Endothelial cell of umbilical vein (primary cell): ENCODE measurements at regions of chr19 and their contacts with region 1.

Region 1: DNA sequence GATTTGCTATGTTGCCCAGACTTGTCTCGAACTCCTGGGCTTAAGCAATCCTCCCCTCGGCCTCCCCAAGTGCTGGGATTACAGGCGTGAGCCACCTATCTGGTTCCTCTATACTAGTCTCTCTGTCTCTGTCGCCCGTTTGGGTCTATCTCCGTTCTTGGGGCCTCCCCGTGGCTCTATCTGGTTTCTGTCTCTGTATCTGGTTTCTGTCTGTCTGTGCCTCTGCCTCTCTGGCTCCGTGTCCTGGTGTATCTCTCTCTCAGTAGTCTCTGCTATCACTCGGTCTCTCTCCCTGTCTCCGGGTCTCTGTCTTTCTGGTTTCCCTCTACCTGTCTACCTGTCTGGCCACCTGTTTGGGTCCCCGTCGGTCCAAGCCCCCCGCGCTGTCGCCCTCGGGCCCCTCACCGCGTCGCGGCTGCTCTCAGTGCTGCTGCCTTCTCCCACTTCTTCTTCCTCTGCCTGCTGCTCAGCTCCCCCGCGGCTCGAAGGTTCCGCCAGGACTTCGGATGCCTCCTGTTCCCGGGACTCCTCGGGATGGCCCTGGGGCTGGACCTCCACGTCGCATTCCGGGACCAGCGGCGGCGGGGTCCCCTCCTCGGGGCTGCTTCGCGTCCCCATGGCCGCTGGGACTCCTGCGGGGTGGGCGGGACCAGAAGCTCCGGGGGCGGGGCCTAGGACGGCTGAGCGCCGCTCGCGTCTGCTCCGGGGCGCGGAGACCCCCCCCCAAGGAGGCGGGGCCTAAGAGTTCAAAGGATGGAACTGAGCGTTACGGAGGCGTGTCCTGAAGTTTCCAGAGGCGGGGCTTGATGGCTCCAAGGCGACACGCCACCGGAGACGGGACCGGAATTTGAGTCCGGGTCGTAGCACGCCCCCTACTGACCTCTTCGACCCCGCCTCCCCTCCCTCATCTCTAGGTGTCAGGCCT is 783 bp downstream of the PHLDB3 start:
- DNase-seq: peak; percentile 95
- H3K4me3 ChIP-seq: peak overlapping the region; percentile 42 to 66 (median 49)
- H3K27ac ChIP-seq: peak overlapping the region; percentile 31
- H3K4me1 ChIP-seq: peaks cover 11% of the 10 kb centered on the region
- H3K27me3 ChIP-seq: no peaks in the 10 kb centered on the region
- CTCF ChIP-seq: peak in 1 of 2 donors; percentile 16
- POLR2A ChIP-seq: no peak

Region 2: GRCh38 chr19:43474986-43475705 is 28.6 kb before region 1 on chr19:
- CTCF ChIA-PET with region 1: interaction called, 6 read pairs
- POLR2A ChIA-PET with region 1: no interaction called
- dilution Hi-C with region 1: no loop called
- intact Hi-C with region 1: loop called (anchors 1 kb)
- DNase-seq: peak; percentile 95
- H3K4me3 ChIP-seq: peak overlapping the region; percentile 30 to 51 (median 44)
- H3K27ac ChIP-seq: peak overlapping the region; percentile 76
- H3K4me1 ChIP-seq: peaks cover 11% of the 10 kb centered on the region
- H3K27me3 ChIP-seq: no peaks in the 10 kb centered on the region
- CTCF ChIP-seq: no peak
- POLR2A ChIP-seq: peak; percentile 52

Region 3: GRCh38 chr19:43526884-43527859 is 23.4 kb after region 1 on chr19 and contains the start of gene ETHE1:
- CTCF ChIA-PET with region 1: interaction called, 3 read pairs
- POLR2A ChIA-PET with region 1: no interaction called
- dilution Hi-C with region 1: no loop called
- intact Hi-C with region 1: loop called (anchors 2 kb)
- DNase-seq: peak; percentile 72
- H3K4me3 ChIP-seq: peak within 1 kb of the TSS; percentile 82 to 97 (median 83)
- H3K27ac ChIP-seq: peak within 1 kb of the TSS; percentile 16
- H3K4me1 ChIP-seq: peaks cover 15% of the 10 kb centered on the region
- H3K27me3 ChIP-seq: no peaks in the 10 kb centered on the region
- CTCF ChIP-seq: no peak
- POLR2A ChIP-seq: peak; percentile 95
- total RNA-seq, gene ETHE1: 29.4 and 34.5 TPM in 2 replicates